Activated B cell treated with CpG ODN at 0.5 μM for 24 hours (primary cell): ENCODE measurements at regions of chr2 and their contacts with region 1.

Region 1: DNA sequence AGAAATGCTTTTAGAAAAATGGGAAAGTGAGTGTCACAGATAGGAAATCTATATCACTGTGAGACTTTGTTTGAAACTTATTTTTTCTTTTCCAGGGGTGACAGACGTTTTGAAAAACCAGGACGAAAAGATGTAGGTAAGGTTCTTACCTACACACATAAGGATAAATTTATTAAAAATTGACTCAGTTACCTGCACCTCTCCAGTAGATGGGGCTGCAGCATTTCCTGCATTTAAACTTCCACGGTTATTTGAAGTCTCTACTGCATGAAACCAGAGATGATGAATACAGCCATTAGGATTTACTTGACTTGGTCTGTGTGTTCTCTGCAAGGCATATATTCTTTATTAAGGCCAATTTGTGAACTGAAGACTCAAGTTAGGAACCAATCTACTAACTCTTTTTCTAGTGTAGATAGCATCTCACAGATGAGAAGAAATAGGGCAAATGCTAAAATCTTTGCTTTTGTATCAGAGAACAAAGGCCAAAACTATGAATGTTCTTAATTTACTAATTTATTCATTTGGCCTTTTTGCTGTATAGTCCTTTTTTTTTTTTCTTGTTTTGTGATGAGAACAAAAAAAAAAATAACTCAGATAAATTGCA is 15.0 kb downstream of the KCNJ13 start:
- DNase-seq: no peak
- ATAC-seq: peak; percentile 54
- H3K4me3 Mint-ChIP-seq: no peak overlapping the region
- H3K27ac Mint-ChIP-seq: no peak overlapping the region
- H3K4me1 Mint-ChIP-seq: no peaks in the 10 kb centered on the region
- H3K27me3 Mint-ChIP-seq: no peaks in the 10 kb centered on the region
- CTCF ChIP-seq: no peak

Region 2: GRCh38 chr2:232146294-232146693 is 615.1 kb before region 1 on chr2:
- CTCF ChIA-PET with region 1: no interaction called
- POLR2A ChIA-PET with region 1: no interaction called
- intact Hi-C with region 1: no loop called
- DNase-seq: no peak
- ATAC-seq: no peak
- H3K4me3 Mint-ChIP-seq: no peak overlapping the region
- H3K27ac Mint-ChIP-seq: no peak overlapping the region
- H3K4me1 Mint-ChIP-seq: no peaks in the 10 kb centered on the region
- H3K27me3 Mint-ChIP-seq: no peaks in the 10 kb centered on the region
- CTCF ChIP-seq: no peak

Region 3: DNA sequence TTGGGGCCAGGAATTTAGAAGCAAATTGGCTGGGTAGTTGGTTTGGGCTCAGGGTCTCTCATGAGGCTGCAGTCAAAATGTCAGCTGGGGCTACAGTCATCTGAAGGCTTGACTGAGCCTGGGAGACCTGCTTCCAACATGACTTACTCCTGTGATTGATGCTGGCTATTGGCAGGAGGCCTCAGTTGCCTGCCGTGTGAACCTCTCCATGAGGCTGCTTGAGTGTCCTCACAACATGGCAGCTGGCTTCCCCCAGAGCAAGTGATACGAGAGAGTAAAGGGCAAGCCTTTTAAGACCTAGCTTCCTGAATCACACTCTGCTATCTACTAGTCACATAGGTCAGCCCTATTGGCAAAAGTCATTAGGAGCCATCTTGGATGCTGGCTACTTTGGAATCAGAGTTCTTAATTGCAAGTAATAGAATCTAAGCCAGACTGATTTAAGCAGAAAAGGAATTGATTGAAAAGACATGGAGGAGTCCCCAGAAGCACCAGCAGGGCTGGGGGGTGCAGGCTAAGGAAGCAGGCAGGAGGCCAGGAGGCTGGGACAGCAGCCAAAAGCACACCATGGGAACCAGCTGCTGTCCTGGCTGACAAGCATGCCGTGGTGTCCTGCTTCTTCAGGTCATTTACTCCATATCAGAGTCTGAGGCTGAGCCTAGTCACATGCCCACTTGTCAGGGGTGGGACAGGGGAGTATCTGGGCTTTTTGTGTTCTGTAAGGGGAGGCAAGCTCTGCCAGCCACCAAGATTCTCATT is 72.1 kb before region 1 on chr2:
- CTCF ChIA-PET with region 1: no interaction called
- POLR2A ChIA-PET with region 1: no interaction called
- intact Hi-C with region 1: no loop called
- DNase-seq: no peak
- ATAC-seq: no peak
- H3K4me3 Mint-ChIP-seq: no peak overlapping the region
- H3K27ac Mint-ChIP-seq: no peak overlapping the region
- H3K4me1 Mint-ChIP-seq: no peaks in the 10 kb centered on the region
- H3K27me3 Mint-ChIP-seq: no peaks in the 10 kb centered on the region
- CTCF ChIP-seq: no peak

Region 4: DNA sequence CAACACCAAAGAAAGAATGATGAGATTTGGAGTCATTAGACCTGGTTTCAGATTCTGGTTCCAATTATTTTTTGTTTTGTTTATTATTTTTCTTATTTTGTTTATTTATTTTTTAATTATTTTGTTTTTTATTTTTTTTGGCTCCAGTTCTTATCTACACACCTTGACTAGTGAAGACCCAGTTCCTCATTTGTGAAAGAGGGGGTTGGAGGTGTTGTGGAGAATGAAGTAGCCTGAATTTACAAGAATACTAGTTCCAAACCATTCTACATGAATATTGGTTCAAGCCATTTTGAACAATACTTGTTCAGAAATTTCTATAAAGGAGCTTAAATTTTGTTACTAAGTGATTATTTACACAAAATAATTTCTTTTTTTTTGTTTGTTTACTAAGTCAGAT is 21.9 kb after region 1 on chr2:
- CTCF ChIA-PET with region 1: no interaction called
- POLR2A ChIA-PET with region 1: interaction called, 12 read pairs
- intact Hi-C with region 1: no loop called
- DNase-seq: no peak
- ATAC-seq: no peak
- H3K4me3 Mint-ChIP-seq: no peak overlapping the region
- H3K27ac Mint-ChIP-seq: no peak overlapping the region
- H3K4me1 Mint-ChIP-seq: peaks cover 11% of the 10 kb centered on the region
- H3K27me3 Mint-ChIP-seq: no peaks in the 10 kb centered on the region
- CTCF ChIP-seq: no peak

Region 5: GRCh38 chr2:232798187-232798586 is 36.8 kb after region 1 on chr2:
- CTCF ChIA-PET with region 1: interaction called, 3 read pairs
- POLR2A ChIA-PET with region 1: no interaction called
- intact Hi-C with region 1: loop called (anchors 5 kb)
- DNase-seq: no peak
- ATAC-seq: no peak
- H3K4me3 Mint-ChIP-seq: no peak overlapping the region
- H3K27ac Mint-ChIP-seq: no peak overlapping the region
- H3K4me1 Mint-ChIP-seq: no peaks in the 10 kb centered on the region
- H3K27me3 Mint-ChIP-seq: no peaks in the 10 kb centered on the region
- CTCF ChIP-seq: no peak

Region 6: GRCh38 chr2:233037078-233037477 is 275.7 kb after region 1 on chr2:
- CTCF ChIA-PET with region 1: no interaction called
- POLR2A ChIA-PET with region 1: no interaction called
- intact Hi-C with region 1: no loop called
- DNase-seq: no peak
- ATAC-seq: no peak
- H3K4me3 Mint-ChIP-seq: no peak overlapping the region
- H3K27ac Mint-ChIP-seq: no peak overlapping the region
- H3K4me1 Mint-ChIP-seq: no peaks in the 10 kb centered on the region
- H3K27me3 Mint-ChIP-seq: peaks cover 2% of the 10 kb centered on the region
- CTCF ChIP-seq: no peak

Region 7: DNA sequence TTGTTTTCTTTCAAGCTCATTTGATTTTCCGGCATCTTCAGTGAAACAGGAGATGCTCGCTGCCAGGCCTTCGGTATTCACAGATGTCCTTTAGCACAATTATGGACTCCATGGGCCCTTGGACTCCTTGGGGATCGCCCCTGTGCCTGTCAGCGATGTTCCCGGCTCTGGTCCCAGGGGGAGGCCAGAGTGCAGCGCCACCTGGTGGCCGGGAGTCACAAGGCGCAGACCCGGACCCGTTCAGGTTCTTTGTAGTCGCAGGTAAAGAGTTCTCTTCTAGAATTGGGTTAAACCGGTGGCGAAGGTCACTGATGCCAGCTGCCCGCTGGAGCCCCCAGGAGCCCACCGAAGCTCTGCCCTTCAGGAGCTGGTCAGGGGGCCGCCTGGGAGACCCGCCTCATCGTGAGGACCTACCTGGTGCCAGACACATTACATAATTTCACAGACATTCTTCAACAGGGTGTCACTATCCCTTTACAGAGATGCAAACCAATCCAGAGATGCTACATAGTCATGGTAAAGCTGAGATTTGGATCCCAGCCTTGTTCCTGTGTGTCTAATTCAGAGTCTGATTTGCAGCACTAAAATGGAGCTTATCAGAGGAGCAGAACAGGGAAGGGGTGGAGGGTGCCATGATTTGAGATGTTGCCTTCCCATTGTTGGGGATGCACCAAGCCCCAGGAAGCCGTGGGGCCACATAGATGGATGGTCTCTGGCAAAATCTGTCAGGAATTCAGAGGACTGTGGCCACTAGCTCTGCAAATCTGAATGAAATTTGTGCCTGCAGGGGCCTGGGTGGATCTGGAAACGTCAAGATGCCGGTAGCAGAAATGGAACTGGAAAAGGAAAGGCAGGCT is 292.8 kb after region 1 on chr2:
- CTCF ChIA-PET with region 1: no interaction called
- POLR2A ChIA-PET with region 1: no interaction called
- intact Hi-C with region 1: loop called (anchors 1 kb)
- DNase-seq: peak; percentile 72
- ATAC-seq: peak; percentile 74
- H3K4me3 Mint-ChIP-seq: no peak overlapping the region
- H3K27ac Mint-ChIP-seq: peak overlapping the region; percentile 32
- H3K4me1 Mint-ChIP-seq: peaks cover 16% of the 10 kb centered on the region
- H3K27me3 Mint-ChIP-seq: peaks cover 3% of the 10 kb centered on the region
- CTCF ChIP-seq: peak; percentile 65